Activated CD4-positive, alpha-beta T cell treated with anti-CD3 and anti-CD28 coated beads for 36 hours (primary cell): ENCODE measurements at regions of chr13 and their contacts with region 1.

Region 1: DNA sequence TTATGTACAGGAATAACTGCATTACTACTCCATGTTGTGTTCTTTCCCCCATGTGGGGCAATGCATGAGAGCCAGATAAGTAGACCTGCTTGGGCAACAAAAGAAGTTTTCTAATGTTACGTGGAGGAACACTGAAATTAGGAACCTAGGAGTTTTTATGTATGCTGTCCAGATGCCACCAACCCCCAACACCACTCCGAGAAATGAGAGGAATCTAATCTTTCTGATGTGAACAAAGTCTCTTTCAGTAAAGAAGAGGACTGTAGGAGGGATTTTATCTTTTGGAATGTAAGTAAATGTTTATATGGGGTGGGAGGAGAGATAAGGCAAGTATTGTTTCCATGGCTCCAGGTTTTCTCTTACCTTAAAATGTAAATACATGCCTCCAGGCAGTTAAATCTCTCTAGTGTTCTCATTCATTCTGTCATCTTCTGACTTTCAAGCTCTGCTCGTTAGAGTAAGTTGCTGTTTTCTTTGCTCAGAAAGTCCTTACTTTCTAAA is 820.6 kb downstream of the PCDH17 start:
- DNase-seq: no peak
- ATAC-seq: no peak
- H3K4me3 Mint-ChIP-seq: no peak overlapping the region
- H3K27ac Mint-ChIP-seq: no peak overlapping the region
- H3K4me1 Mint-ChIP-seq: no peaks in the 10 kb centered on the region
- H3K27me3 Mint-ChIP-seq: no peaks in the 10 kb centered on the region

Region 2: GRCh38 chr13:57824121-57824520 is 628.1 kb before region 1 on chr13:
- CTCF ChIA-PET with region 1: no interaction called
- POLR2A ChIA-PET with region 1: no interaction called
- intact Hi-C with region 1: no loop called
- DNase-seq: no peak
- ATAC-seq: no peak
- H3K4me3 Mint-ChIP-seq: no peak overlapping the region
- H3K27ac Mint-ChIP-seq: no peak overlapping the region
- H3K4me1 Mint-ChIP-seq: no peaks in the 10 kb centered on the region
- H3K27me3 Mint-ChIP-seq: no peaks in the 10 kb centered on the region

Region 3: GRCh38 chr13:58429917-58430316 is 22.3 kb before region 1 on chr13:
- CTCF ChIA-PET with region 1: no interaction called
- POLR2A ChIA-PET with region 1: no interaction called
- intact Hi-C with region 1: loop called in 1 of 2 experiments (anchors 2 kb)
- DNase-seq: no peak
- ATAC-seq: no peak
- H3K4me3 Mint-ChIP-seq: no peak overlapping the region
- H3K27ac Mint-ChIP-seq: no peak overlapping the region
- H3K4me1 Mint-ChIP-seq: no peaks in the 10 kb centered on the region
- H3K27me3 Mint-ChIP-seq: no peaks in the 10 kb centered on the region

Region 4: GRCh38 chr13:58919551-58919950 is 467.4 kb after region 1 on chr13:
- CTCF ChIA-PET with region 1: no interaction called
- POLR2A ChIA-PET with region 1: no interaction called
- intact Hi-C with region 1: no loop called
- DNase-seq: no peak
- ATAC-seq: no peak
- H3K4me3 Mint-ChIP-seq: no peak overlapping the region
- H3K27ac Mint-ChIP-seq: no peak overlapping the region
- H3K4me1 Mint-ChIP-seq: no peaks in the 10 kb centered on the region
- H3K27me3 Mint-ChIP-seq: no peaks in the 10 kb centered on the region